CD4-positive, alpha-beta memory T cell (primary cell): ENCODE measurements at regions of chr1 and their contacts with region 1.

Region 1: GRCh38 chr1:213533125-213533524 is 454.6 kb upstream of the PROX1 start:
- DNase-seq: no peak
- H3K4me3 ChIP-seq: no peak overlapping the region
- H3K4me3 Mint-ChIP-seq: no peak overlapping the region
- H3K27ac ChIP-seq: no peak overlapping the region
- H3K27ac Mint-ChIP-seq: no peak overlapping the region
- H3K4me1 ChIP-seq: no peaks in the 10 kb centered on the region
- H3K4me1 Mint-ChIP-seq: no peaks in the 10 kb centered on the region
- H3K27me3 ChIP-seq: no peaks in the 10 kb centered on the region
- H3K27me3 Mint-ChIP-seq: peaks cover 0 to 1% of the 10 kb centered on the region in 2 donors

Region 2: DNA sequence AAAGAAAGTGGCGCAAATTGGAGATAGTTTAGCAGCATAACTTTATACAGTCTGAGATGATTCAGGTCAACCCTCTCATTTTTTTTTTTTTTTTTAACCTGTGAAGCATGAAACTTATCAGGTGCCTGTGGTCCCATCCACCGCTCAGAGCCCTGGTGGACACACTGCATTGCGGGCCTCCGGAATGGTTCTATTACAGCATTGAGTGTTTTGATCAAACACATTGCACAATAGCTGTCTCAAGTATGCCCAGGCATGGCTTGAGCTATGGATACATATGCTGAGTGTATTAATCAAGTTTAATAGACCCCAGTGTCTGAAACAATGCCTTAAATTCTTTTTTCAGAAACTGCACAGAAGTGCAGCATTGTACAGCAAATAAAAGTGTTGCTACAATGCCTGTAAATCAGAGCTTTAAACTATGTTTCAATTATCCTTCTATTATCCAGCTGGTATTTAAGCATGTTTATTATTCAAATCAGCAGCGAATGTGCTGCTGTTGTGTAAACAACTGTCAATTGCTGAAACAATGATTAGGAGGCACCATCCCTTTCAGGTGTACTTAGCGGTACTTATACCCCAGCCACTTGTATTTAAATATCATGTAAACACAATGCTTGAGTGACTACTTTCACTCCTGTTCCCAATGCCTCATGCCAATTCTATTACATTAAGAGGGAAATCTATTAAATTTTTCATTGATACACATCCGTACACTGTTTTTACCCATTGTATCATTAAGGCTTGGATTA is 25.5 kb before region 1 on chr1:
- CTCF ChIA-PET with region 1: no interaction called
- POLR2A ChIA-PET with region 1: no interaction called
- intact Hi-C with region 1: loop called (anchors 1 kb)
- DNase-seq: no peak
- H3K4me3 ChIP-seq: no peak overlapping the region
- H3K4me3 Mint-ChIP-seq: no peak overlapping the region
- H3K27ac ChIP-seq: no peak overlapping the region
- H3K27ac Mint-ChIP-seq: no peak overlapping the region
- H3K4me1 ChIP-seq: no peaks in the 10 kb centered on the region
- H3K4me1 Mint-ChIP-seq: no peaks in the 10 kb centered on the region
- H3K27me3 ChIP-seq: no peaks in the 10 kb centered on the region
- H3K27me3 Mint-ChIP-seq: peaks cover 2% of the 10 kb centered on the region in 2 donors